ENCODE measurements at regions of chr9 and their contacts with region 1.

Region 1: DNA sequence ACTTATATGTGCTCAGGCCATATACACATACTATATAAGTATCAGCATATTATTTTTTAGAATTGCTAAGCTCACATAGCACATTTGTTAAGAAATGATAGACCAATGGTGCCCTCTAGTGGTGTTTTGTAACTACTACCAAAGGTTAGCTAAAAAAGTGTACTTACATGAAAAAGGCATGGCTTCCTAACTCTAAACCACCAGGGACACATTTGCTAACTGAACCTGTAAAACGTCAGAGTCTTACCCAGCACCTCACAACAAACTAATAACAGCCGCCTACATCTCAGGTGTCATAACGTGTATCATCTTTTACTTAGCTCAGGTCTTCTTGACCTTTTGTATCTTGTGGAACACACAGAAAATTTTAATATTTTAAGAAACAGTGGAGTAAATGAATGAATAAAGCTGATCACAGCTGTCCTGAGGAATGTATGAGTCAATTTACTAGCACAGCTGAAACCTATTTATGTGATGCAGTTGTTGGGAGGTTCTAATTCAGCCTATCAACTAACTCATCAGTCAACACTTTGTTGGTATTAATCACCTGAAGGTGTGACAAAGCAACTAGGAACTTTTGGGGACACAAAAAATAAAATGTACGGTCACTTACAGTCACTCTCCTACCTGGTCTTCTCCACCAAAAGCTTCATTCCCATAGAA is 72.9 kb downstream of the BAAT start:
- DNase-seq: peak; percentile 55
- CTCF ChIP-seq: peak; percentile 62

Region 2: GRCh38 chr9:100598641-100599145 is 713.2 kb before region 1 on chr9:
- in situ Hi-C with region 1: loop called (anchors 25 kb)
- DNase-seq: peak; percentile 79
- CTCF ChIP-seq: no peak

Region 3: GRCh38 chr9:100714372-100715099 is 597.4 kb before region 1 on chr9:
- in situ Hi-C with region 1: loop called (anchors 25 kb)
- DNase-seq: peak; percentile 65
- CTCF ChIP-seq: peak; percentile 76

Region 4: DNA sequence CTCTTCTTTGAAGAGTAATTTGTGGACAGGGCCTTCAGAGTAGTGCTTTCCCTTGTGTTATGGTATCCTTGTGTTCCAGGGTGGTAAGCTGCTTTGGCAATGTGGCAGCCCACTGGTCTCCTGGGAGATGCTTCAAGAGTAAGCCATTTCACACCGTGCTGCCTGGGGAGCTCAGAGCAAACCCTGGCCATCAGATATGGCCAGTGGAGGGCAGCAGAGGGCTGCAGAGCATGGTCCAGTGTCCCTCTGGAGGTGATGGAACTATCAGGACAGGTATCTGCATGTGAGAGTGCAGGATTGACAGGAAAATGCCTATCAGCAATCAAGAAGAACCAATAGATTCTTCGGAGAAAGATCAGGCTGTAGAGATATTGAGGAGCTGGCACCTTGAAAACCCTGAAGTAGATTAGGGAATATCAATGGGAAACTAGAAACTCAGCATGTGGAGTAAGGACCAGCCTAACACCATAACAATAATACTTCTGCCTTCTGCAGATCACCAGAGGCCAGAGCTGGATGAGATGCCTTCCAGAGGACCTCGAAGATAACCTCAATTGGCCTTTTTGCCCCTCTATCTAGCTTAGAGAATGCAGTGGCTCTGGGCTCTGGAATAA is 192.6 kb before region 1 on chr9:
- in situ Hi-C with region 1: loop called (anchors 25 kb)
- DNase-seq: peak; percentile 35
- CTCF ChIP-seq: peak; percentile 79

Measured in GM13976 (cell line).